ENCODE measurements at regions of chr7 and their contacts with region 1.

Region 1: GRCh38 chr7:2403014-2403717 is at the start of gene CHST12:
- DNase-seq: peak; percentile 93
- H3K4me3 Mint-ChIP-seq: peak within 1 kb of the TSS; percentile 80
- H3K27ac Mint-ChIP-seq: no peak within 1 kb of the TSS
- H3K4me1 Mint-ChIP-seq: peaks cover 40% of the 10 kb centered on the region
- H3K27me3 Mint-ChIP-seq: no peaks in the 10 kb centered on the region
- total RNA-seq, gene CHST12: 0.62 to 0.64 TPM

Region 2: DNA sequence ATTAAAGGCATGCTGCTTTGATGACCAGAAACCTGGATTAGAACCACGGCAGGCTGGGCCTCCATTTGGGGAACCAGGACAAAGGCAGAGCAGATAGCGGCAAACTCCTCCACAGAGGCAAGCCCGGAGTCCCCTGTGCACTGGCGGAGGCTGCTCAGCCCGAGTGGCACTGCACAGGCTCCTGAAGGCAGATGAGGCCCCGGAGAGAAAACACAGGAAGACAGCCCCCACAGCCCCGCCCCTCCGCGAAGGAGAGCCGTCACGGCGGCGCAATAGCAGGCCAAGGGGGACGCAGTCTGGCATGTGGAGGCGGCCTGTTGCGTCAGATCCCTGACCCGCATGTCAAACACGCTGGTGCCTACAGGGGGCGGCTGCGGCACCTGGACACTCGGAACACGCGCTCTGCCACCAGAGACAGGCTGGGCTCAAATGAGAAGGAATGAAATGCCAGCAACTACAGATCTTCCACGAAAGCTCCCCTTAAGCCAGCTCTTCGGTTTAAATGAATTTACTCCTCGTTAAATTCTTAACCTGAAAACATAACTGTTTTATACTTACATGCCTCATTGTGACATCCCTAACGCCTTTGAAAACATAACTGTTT is 299.0 kb before region 1 on chr7:
- CTCF ChIA-PET with region 1: no interaction called
- intact Hi-C with region 1: loop called (anchors 5 kb)
- DNase-seq: peak; percentile 88
- H3K4me3 Mint-ChIP-seq: peak overlapping the region; percentile 56
- H3K27ac Mint-ChIP-seq: peak overlapping the region; percentile 74
- H3K4me1 Mint-ChIP-seq: peaks cover 39% of the 10 kb centered on the region
- H3K27me3 Mint-ChIP-seq: no peaks in the 10 kb centered on the region

Region 3: DNA sequence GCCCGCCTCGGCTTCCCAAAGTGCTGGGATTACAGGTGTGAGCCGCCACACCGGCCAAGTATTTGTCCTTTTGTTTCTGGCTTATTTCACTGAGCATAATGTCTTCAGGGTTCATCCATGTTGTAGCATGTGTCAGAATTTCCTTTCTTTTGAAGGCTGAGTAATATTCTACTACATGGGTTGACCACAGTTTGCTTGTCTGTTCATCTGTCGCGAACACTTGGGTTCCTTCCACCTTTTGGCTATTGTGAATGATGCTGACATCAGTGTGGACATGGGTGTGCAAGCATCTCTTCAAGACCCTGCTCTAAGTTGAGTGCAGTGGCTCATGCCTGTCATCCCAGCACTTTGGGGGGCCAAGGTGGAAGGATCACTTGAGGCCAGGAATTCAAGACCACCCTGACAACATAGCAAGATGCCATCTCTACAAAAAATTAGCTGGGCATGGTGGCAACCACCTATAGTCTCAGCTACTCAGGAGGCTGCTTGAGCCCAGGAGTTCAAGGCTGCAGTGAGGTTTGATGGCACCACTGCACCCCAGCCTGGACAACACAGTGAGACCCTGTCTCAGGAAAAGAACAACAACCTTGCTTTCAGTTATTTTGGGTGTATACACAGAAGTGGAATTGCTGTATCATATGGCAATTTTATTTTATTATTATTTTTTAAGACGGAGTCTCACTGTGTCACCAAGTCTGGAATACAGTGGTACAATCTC is 17.2 kb after region 1 on chr7:
- CTCF ChIA-PET with region 1: no interaction called
- intact Hi-C with region 1: loop called (anchors 2 kb)
- DNase-seq: no peak
- H3K4me3 Mint-ChIP-seq: no peak overlapping the region
- H3K27ac Mint-ChIP-seq: no peak overlapping the region
- H3K4me1 Mint-ChIP-seq: peaks cover 25% of the 10 kb centered on the region
- H3K27me3 Mint-ChIP-seq: no peaks in the 10 kb centered on the region

Region 4: GRCh38 chr7:2460188-2460587 is 57.0 kb after region 1 on chr7:
- CTCF ChIA-PET with region 1: no interaction called
- intact Hi-C with region 1: no loop called
- DNase-seq: no peak
- H3K4me3 Mint-ChIP-seq: no peak overlapping the region
- H3K27ac Mint-ChIP-seq: no peak overlapping the region
- H3K4me1 Mint-ChIP-seq: no peaks in the 10 kb centered on the region
- H3K27me3 Mint-ChIP-seq: no peaks in the 10 kb centered on the region

Region 5: DNA sequence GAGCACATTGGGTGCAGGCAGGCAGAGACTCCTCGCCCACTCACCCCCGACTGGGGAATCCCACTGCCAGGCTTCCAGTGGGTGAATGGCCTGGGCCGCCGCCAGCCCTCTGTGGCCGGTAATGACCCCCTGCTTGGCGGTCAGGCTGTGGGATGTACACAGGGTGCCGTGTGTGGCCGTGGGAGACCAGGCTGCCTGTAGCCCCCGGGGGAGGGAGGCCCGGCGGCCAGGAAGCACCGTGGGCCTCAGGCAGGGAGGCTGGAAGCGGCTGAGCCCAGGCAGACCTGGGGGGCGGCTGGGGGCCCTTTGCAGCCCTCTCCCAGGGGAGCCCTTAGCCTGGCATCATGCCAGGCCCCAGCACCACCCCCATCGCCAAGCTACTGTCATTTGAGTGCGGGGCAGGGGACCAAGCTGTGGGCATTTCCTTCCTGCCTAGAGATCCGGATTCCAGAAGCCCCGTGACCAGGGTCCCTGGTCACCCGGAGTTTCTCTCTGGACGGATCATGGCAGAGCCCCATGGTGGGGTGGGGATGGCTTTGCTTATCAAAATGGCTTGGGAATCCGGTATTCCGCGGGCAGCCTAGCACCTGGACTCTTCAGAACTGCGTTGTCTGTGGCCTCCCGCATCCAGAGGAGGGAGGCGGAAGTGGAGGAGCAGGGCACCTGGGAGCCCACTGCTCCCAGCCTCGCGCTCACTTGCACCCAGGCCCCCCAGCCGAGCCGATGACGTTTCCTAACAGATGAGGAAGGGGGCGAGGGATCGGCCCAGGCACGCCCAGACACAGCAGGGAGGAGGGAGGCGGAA is 229.8 kb after region 1 on chr7:
- CTCF ChIA-PET with region 1: no interaction called
- intact Hi-C with region 1: loop called (anchors 5 kb)
- DNase-seq: peak; percentile 67
- H3K4me3 Mint-ChIP-seq: peak overlapping the region; percentile 92
- H3K27ac Mint-ChIP-seq: peak overlapping the region; percentile 53
- H3K4me1 Mint-ChIP-seq: peaks cover 15% of the 10 kb centered on the region
- H3K27me3 Mint-ChIP-seq: no peaks in the 10 kb centered on the region

Measured in activated naive CD4-positive, alpha-beta T cell treated with anti-CD3 and anti-CD28 coated beads for 36 hours (primary cell).